ENCODE measurements at regions of chr6 and their contacts with region 1.

Region 1: GRCh38 chr6:53492860-53493634 is 51.9 kb downstream of the GCLC start:
- DNase-seq: peak; percentile 65
- H3K4me3 ChIP-seq: peak overlapping the region; percentile 20 to 36 (median 21)
- H3K27ac ChIP-seq: peak overlapping the region; percentile 16
- H3K4me1 ChIP-seq: peaks cover 22% of the 10 kb centered on the region
- H3K27me3 ChIP-seq: no peaks in the 10 kb centered on the region
- CTCF ChIP-seq: peak; percentile 71 to 72

Region 2: GRCh38 chr6:53544470-53545308 is 51.6 kb after region 1 on chr6 and contains the start of gene GCLC:
- CTCF ChIA-PET with region 1: no interaction called
- dilution Hi-C with region 1: no loop called
- in situ Hi-C with region 1: no loop called
- intact Hi-C with region 1: loop called (anchors 1 kb)
- DNase-seq: peak; percentile 94
- H3K4me3 ChIP-seq: peak within 1 kb of the TSS; percentile 73 to 87 (median 79)
- H3K27ac ChIP-seq: peak within 1 kb of the TSS; percentile 85
- H3K4me1 ChIP-seq: peaks cover 23% of the 10 kb centered on the region
- H3K27me3 ChIP-seq: no peaks in the 10 kb centered on the region
- CTCF ChIP-seq: peak; percentile 26 to 55
- total RNA-seq, gene GCLC: 94.7 to 128 TPM

Region 3: GRCh38 chr6:53679446-53679933 is 186.4 kb after region 1 on chr6:
- CTCF ChIA-PET with region 1: no interaction called
- dilution Hi-C with region 1: no loop called
- in situ Hi-C with region 1: no loop called
- intact Hi-C with region 1: loop called (anchors 1 kb)
- DNase-seq: peak; percentile 37
- H3K4me3 ChIP-seq: no peak overlapping the region
- H3K27ac ChIP-seq: peak overlapping the region; percentile 20
- H3K4me1 ChIP-seq: no peaks in the 10 kb centered on the region
- H3K27me3 ChIP-seq: no peaks in the 10 kb centered on the region
- CTCF ChIP-seq: peak; percentile 42 to 53

Region 4: DNA sequence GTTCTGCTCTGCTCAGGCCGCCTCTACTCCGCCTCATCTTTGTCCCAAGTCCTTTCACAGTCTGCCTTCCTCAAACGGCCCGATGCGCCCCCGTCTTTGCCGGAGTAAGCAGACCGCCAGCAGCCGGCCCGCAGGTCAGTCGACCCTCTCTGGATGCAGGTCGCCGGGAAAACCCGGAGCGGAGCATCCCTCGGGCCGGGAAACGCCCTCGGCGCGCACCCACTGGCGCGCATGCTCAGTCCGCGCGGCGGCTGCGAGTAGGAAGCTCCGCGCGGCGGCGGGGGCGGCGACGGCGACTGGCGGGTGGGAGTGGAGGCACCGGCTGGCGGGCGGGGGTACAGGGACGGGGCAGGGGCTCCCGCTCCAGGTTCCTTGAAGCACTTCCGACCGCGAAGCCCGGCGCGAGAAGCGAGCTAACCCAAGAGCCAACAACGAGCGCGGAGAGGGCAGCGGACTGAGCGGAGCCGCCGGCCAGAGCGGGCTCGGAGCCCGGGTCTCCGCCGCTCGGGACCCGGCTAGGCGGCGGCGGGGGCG is 301.7 kb after region 1 on chr6 and contains the start of gene LRRC1:
- CTCF ChIA-PET with region 1: no interaction called
- dilution Hi-C with region 1: no loop called
- in situ Hi-C with region 1: no loop called
- intact Hi-C with region 1: loop called (anchors 1 kb)
- DNase-seq: peak; percentile 89
- H3K4me3 ChIP-seq: peak within 1 kb of the TSS; percentile 89 to 97 (median 93)
- H3K27ac ChIP-seq: peak within 1 kb of the TSS; percentile 77
- H3K4me1 ChIP-seq: peaks cover 31% of the 10 kb centered on the region
- H3K27me3 ChIP-seq: no peaks in the 10 kb centered on the region
- CTCF ChIP-seq: no peak
- total RNA-seq, gene LRRC1: 18.2 to 19.2 TPM

Region 5: DNA sequence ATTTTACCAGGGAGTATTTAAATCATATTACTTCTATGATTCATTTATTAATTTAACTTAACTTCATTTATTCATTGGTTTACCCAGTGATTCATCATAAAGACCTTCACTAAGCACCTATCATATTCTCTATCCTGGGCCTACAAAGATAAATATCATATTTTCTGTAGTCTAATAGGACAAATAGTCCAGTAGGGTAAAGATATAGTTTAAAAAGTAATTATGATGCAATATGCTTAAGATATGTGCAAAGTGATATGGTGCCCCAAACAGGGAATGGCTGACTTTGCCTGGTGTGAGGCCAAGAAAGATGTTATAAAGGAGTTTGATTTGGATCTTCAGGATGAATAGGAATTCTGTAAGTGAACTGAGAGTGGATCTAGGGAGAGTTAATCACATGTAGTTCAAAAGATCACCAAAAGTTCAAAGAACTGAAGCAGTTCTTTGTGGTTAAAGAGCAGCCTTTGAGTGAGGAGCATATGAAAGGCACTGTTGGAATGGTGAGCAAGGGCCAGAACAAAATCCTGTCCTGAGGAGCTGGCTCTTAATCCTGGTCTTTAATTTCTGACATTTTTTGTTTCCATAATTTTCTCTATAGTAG is 663.7 kb after region 1 on chr6:
- CTCF ChIA-PET with region 1: no interaction called
- dilution Hi-C with region 1: no loop called
- in situ Hi-C with region 1: no loop called
- intact Hi-C with region 1: no loop called
- DNase-seq: no peak
- H3K4me3 ChIP-seq: no peak overlapping the region
- H3K27ac ChIP-seq: no peak overlapping the region
- H3K4me1 ChIP-seq: no peaks in the 10 kb centered on the region
- H3K27me3 ChIP-seq: no peaks in the 10 kb centered on the region
- CTCF ChIP-seq: no peak

Measured in mammary epithelial cell (primary cell).